Activated T-helper 1 cell treated with anti-CD3 and anti-CD28 coated beads, Interleukin-12 subunit alpha, Interleukin-12 subunit beta, Interleukin-2, Interleukin-4 antibody, amounts not matched to agents 30 ng/mL and 10 ng/mL and 1 ng/mL, durations not matched to agents 14 hours and 24 hours and 36 hours (primary cell): ENCODE measurements at regions of chr14 and their contacts with region 1.

Region 1: DNA sequence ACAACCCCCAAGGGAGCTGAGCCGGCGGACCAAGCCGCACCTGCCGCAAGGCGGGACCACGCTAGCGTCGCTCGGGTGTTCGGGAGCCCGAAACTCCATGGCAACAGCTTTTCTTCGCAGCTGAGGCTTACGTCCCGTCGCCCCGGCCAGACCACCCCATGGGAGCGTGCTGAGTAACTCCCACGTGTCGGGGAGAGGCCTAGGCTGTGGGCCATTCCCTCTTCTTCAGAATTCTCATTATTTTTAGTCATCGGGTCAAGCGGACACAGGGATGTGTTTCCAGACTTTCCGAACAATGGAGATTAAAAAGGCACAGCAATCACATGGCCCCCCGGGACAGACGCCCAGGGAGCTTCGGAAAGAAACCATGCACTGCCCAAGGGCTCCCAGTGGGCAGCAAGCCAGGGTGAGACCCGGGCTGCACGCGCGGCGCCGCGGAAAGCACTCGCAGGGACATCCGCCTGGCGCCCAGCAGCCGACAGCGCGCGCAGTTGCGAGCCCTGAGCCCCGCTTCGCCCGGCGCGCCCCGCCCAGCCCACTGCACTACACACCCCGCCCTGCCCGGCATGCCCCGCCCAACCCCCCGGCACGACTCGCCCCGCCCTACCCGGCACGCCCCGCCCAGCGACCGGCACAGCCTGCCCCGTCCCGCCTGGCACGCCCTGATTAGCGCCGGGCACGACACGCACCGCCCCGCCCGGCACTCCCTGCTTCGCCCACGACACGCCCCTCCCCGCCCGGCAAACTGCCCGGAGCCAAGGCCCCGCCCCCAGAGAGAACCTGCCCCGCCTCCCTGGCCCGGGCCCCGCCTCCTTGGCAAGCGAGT is 422 bp upstream of the AK7 start:
- DNase-seq: peak; percentile 100
- H3K4me3 Mint-ChIP-seq: peak overlapping the region; percentile 91
- H3K27ac Mint-ChIP-seq: peak overlapping the region; percentile 84
- H3K4me1 Mint-ChIP-seq: peaks cover 6% of the 10 kb centered on the region
- H3K27me3 Mint-ChIP-seq: peaks cover 2% of the 10 kb centered on the region

Region 2: DNA sequence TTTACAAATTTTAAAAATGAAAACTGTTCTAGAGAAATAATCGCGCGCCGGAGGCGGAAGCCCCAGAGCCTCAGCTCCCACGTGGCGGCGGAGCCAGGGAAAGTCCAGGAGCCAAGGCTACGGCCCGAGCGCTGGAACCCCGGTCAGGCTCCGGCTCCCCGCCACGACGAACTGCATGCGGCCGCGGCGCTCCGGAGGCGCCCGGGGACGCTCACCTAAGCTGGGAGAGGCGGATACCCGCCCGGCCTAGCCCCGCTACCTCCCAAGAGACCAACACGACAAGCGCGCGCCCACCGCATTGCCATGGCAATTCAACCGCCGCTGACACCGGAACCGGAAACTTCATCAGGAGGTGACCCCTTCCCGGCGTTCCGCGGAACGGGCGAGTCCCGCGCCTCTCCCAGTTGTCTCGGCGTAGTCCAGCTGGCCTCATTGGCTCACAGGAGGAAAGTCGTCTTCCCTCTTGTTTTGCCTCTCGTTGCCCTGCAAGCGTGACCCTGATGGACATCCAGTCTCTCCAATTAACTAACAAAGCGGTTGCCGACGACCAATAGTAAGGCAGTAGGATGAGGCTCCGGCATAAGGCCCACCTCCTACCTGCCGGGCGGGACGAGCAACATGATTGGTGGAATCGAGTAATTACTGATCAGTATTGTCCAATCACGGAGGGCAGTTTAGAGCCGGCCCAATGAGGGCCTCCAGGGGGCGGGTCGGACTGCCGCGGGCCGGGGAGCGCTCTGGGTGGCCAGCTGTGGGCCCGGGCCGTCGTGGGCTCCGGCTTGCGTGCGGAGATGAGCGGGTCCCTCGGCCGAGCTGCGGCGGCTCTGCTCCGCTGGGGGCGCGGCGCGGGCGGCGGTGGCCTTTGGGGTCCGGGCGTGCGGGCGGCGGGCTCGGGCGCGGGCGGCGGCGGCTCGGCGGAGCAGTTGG is 856.9 kb before region 1 on chr14 and contains the start of gene GLRX5:
- intact Hi-C with region 1: loop called (anchors 1 kb)
- DNase-seq: peak; percentile 98
- H3K4me3 Mint-ChIP-seq: peak within 1 kb of the TSS; percentile 98
- H3K27ac Mint-ChIP-seq: peak within 1 kb of the TSS; percentile 95
- H3K4me1 Mint-ChIP-seq: peaks cover 73% of the 10 kb centered on the region
- H3K27me3 Mint-ChIP-seq: no peaks in the 10 kb centered on the region
- total RNA-seq, gene GLRX5: 46.7 and 48.9 TPM in 2 replicates

Region 3: DNA sequence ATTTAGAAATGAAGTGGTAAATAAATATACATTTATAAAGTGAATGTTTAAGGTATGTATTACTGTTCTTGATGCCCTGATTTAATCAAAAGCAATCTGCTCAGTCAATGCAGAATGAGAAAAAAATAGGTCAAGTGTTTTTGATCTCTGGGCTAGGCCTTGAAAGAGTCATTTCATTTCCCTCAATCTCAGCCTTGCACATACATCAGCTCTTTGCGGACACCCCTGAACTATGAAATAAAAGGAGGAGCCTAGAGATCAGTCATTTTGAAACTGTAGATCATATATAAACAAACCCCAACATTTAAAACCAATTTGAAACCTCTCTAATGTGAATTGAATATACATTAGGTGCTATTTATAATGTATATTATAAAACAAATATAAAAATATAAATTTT is 70.9 kb before region 1 on chr14:
- intact Hi-C with region 1: no loop called
- DNase-seq: no peak
- H3K4me3 Mint-ChIP-seq: no peak overlapping the region
- H3K27ac Mint-ChIP-seq: no peak overlapping the region
- H3K4me1 Mint-ChIP-seq: no peaks in the 10 kb centered on the region
- H3K27me3 Mint-ChIP-seq: no peaks in the 10 kb centered on the region

Region 4: DNA sequence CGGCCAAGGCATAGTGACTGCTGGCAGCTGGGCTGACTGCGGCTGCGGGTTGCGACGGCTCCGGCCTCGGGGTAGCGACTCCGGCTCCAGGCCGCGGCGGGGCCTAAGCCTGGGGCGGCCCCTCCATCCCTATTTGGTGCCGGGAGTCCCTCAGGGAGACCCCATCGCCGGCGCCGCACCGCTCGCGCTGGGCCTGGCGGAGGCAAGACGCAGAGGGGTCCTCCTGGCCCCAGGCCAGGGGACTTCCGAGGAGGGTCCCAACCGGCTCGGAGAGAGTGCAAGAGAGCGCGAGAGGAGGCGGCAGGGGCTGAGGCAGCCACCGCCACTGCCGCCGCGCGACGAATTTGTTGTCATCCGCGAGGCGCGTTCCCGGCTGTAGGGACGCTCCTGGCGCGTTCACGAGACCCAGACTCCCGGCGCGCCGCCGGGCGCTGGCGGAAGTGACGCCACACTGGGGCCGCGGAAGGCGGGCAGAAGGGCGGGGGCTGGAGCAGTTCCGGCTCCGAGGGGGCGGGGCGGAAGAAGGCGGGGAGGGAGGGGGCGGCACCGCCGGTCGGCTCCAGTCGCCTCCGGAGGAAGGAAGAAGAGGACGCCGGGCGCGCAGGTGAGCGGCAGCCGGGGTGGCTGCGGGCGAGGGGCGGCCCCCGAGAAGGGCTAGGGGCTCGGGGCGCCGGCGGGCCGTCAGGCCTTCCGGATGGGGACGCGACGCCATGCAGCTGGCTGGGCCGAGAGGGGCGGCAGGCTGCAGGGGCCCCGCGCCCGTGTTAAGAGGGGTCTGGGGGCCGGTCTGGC is 28.3 kb before region 1 on chr14 and contains the starts of genes ATG2B and GSKIP:
- intact Hi-C with region 1: loop called (anchors 1 kb)
- DNase-seq: peak; percentile 97
- H3K4me3 Mint-ChIP-seq: peak within 1 kb of the TSS; percentile 98
- H3K27ac Mint-ChIP-seq: peak within 1 kb of the TSS; percentile 97
- H3K4me1 Mint-ChIP-seq: peaks cover 55% of the 10 kb centered on the region
- H3K27me3 Mint-ChIP-seq: no peaks in the 10 kb centered on the region
- total RNA-seq, gene ATG2B: 22.2 and 27.7 TPM in 2 replicates
- total RNA-seq, gene GSKIP: 22.7 and 23.7 TPM in 2 replicates

Region 5: DNA sequence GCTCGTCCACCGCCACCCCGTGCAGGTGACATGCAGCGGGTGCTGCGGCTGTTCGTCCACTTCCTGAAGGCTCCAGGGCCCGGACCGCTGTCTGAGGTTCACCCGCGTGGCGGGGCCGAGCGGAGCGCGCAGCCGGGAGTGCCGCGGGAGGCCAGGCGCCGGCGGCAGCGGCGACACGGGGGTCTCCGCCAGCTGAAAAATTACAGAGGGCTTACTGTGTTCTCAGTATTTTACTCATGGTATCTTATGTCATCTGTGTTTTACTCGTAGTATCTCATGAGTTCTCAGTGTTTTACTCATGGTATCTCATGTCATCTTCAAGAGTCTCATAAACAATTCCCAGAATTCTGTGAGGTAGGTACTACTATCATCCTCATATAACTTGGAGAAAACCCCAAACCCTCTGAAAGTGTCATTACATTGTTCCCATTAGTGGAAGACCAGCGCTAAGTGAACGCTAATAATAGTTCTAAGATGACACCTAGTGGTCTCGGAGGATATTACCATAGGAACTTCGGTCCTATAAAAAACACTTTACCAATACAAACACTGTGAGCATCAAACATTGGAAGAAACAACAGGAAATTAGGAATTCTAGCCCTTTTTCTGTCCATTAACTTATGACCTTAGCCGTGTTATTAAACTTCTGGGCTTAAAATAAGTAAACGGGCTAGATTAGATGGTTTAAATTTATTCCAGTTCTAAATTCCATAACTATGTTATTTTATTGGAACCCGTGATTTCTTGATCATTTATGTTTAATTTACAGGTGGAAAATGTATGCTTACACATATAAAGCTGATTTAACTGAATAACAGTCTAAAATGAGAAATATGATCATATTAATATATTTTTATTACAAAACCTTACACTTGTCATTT is 32.8 kb after region 1 on chr14:
- intact Hi-C with region 1: loop called (anchors 2 kb)
- DNase-seq: peak; percentile 10
- H3K4me3 Mint-ChIP-seq: peak overlapping the region; percentile 71
- H3K27ac Mint-ChIP-seq: no peak overlapping the region
- H3K4me1 Mint-ChIP-seq: peaks cover 11% of the 10 kb centered on the region
- H3K27me3 Mint-ChIP-seq: peaks cover 7% of the 10 kb centered on the region

Region 6: DNA sequence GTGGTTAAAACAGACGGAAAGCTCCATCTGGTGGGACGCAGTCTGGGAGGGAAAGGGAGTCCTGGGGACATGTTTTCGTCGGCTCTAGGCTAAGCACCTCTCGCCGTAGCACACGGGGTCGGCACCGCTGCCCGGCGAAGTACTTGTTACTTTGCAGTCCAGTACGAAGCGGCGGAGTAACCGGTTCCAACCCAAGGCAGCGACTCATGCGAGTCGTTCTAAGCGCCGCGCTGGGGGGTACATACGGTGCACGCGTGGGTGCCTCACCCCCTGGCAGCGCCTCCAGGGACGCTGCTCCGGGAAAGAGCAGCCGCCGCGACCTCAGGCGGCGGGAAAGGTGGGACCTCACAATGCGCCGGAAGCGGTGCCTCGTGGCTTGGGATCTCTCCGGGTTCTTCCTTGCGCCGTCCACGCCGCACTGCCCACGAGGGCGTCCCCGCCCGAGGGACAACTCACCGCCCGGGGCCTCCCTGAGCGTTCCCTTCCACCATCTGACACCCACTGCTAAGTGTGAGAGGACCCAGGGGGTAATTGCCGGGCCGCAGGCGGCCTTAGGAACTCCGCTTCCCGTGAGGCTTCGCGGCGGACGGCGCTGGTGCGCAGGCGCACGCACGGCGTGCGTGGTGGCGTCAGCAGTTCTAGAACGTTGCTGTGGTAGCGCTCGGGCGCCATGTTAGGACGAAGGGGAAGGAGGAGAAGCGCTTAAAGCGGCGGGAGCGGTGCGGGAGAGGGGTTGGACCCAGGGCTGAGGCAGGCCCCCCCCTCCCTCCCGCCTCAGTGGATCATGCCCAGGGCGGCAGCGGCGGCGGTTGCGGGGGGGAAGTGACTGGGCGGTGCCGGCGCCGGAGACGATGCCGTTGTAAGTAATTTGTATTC is 110.5 kb after region 1 on chr14 and contains the start of gene PAPOLA:
- intact Hi-C with region 1: loop called (anchors 1 kb)
- DNase-seq: peak; percentile 96
- H3K4me3 Mint-ChIP-seq: peak within 1 kb of the TSS; percentile 97
- H3K27ac Mint-ChIP-seq: peak within 1 kb of the TSS; percentile 97
- H3K4me1 Mint-ChIP-seq: peaks cover 47% of the 10 kb centered on the region
- H3K27me3 Mint-ChIP-seq: peaks cover 16% of the 10 kb centered on the region
- total RNA-seq, gene PAPOLA: 191 and 217 TPM in 2 replicates

Region 7: DNA sequence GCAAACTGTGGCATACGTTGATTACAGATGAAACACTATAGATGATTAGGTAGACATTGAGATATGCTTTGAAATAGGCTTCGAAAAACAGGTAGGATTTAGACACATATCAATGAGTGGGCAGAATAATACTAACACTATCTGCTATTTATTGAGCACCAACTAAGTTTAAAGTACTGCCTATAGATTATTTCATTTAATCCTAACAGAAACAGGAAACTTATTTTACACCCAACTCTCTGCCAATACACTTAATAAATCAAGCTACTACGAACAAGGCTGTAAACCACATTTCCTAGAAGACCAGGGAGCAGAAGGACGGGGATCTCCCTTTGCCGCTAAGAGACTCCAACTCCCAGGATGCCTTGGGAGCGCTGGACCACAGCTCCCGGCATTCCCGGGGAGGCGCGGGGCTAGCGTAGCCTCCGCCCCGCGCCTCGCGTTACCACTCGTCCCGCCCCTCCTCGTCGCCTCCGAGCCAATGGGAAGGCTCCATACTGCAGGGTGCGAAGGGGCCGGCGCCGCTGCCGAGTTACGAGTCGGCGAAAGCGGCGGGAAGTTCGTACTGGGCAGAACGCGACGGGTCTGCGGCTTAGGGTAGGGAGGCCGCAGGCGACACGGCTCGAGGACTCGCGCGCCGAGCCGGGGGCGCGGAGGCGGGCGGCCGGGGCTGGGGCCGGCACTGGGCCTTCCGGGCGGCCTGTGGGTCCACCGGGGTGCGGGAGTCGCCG is 405.5 kb after region 1 on chr14 and contains the start of gene VRK1:
- intact Hi-C with region 1: loop called (anchors 1 kb)
- DNase-seq: peak; percentile 91
- H3K4me3 Mint-ChIP-seq: peak within 1 kb of the TSS; percentile 91
- H3K27ac Mint-ChIP-seq: peak within 1 kb of the TSS; percentile 82
- H3K4me1 Mint-ChIP-seq: peaks cover 45% of the 10 kb centered on the region
- H3K27me3 Mint-ChIP-seq: peaks cover 9% of the 10 kb centered on the region
- total RNA-seq, gene VRK1: 72.1 and 79.4 TPM in 2 replicates